ENCODE measurements at regions of chr1 and their contacts with region 1.

Region 1: GRCh38 chr1:9784508-9785133 is 39.1 kb downstream of the CLSTN1 start:
- DNase-seq: peak; percentile 63
- ATAC-seq: peak; percentile 33; the same call in 1 of the 2 replicates
- H3K4me3 Mint-ChIP-seq: no peak overlapping the region
- H3K27ac Mint-ChIP-seq: no peak overlapping the region
- H3K4me1 Mint-ChIP-seq: peaks cover 19% of the 10 kb centered on the region
- H3K27me3 Mint-ChIP-seq: no peaks in the 10 kb centered on the region
- CTCF ChIP-seq: peak; percentile 48

Region 2: DNA sequence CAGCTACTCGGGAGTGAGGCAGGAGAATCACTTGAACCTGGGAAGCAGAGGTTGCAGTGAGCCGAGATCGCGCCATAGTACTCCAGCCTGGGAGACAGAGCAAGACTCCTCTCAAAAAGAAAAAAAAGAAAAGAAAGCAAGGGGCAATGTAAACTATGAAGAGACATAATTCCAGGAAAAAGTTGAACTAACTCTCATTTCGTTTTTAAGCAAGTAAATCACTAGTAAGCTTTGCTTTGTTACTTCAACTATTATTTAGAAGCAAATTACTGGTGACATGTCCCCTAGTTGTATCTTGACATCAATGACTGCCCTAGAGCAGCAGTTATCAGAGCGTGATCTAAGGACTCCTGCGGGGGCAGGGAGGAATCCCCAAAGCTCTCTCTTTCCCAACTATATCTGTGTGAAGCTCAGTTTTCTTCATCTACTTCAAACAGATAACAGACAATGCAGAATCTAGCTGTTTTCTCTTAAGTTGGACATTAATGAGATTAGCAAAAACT is 20.4 kb after region 1 on chr1:
- CTCF ChIA-PET with region 1: interaction called, 11 read pairs
- POLR2A ChIA-PET with region 1: no interaction called
- DNase-seq: peak; percentile 9
- ATAC-seq: peak; percentile 40; the same call in 1 of the 2 replicates
- H3K4me3 Mint-ChIP-seq: no peak overlapping the region
- H3K27ac Mint-ChIP-seq: peak overlapping the region; percentile 13; the same call in 1 of the 2 replicates
- H3K4me1 Mint-ChIP-seq: peaks cover 41% of the 10 kb centered on the region
- H3K27me3 Mint-ChIP-seq: no peaks in the 10 kb centered on the region
- CTCF ChIP-seq: no peak

Region 3: DNA sequence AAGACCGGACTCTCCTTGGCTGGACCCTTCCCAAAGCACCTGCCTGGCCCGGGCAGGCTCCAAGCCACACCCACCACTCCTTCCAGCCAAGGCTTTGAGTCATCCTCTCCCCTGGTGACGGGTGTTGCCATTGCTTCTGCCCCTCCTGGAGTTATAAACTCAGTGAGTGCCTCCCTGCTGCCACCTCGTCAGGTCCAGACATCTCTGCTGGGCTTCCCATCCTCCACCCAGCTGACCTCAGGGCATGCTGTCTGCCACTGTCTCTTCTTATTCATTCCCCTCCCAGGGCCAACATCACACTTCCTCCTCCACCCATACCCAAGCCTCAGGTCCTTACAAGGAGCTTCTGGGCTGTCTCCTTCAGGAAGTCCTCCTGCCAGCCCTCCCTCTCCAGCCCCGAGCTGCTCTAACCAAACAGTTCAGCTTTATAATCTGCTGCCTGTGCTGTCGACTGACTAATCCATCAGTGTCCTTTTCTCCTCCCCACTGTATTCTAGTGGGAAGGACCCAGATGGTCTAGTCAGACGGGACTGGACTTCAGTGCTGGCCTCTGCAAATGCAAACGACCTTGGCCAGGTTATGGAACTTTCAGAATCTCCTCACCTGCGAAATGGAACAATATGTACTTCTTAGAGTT is 41.0 kb after region 1 on chr1:
- CTCF ChIA-PET with region 1: interaction called, 13 read pairs
- POLR2A ChIA-PET with region 1: interaction called, 3 read pairs
- DNase-seq: peak; percentile 58
- ATAC-seq: peak; percentile 57
- H3K4me3 Mint-ChIP-seq: peak overlapping the region; percentile 71
- H3K27ac Mint-ChIP-seq: no peak overlapping the region
- H3K4me1 Mint-ChIP-seq: peaks cover 42% of the 10 kb centered on the region
- H3K27me3 Mint-ChIP-seq: peaks cover 35% of the 10 kb centered on the region
- CTCF ChIP-seq: no peak

Region 4: DNA sequence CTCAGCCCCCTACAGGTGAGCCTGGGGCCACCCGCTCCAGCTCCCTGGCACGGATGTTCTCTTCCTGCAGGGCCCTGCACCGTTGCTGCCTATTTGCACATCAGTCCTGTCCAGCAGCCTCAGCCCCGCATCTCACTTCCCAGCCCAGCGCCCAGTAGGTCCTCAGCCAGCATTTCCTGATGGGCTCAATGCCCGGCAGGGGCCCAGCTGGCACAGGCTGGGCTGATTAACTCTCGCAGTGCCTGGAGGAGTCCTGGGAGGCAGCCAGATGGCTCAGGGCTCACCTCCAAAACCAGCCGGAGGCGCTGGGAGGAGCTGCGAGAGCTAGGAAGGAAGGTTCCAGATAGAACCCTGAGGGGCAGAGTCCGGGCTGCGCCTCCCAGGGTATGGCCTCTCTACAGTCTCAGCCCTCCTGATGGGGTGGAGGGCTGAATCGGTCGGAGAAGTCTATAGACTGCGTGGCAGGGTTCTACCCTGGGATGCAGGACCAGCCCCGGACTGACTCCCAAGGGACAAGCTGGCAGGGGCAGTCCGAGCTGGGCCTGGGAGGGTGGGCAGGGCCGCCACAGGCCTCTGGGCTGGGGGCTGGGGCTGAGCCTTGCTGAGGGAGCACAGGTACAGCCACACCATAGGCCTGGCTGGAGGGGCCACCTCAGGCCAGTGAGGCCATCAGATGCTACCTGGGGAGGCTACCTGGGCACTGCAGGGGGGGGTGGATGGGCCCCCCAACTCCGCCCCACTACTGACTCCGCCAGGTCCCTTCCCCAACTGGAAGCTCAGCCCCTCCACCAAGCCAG is 58.4 kb after region 1 on chr1:
- CTCF ChIA-PET with region 1: interaction called, 11 read pairs
- POLR2A ChIA-PET with region 1: no interaction called
- DNase-seq: no peak
- ATAC-seq: peak; percentile 46
- H3K4me3 Mint-ChIP-seq: no peak overlapping the region
- H3K27ac Mint-ChIP-seq: no peak overlapping the region
- H3K4me1 Mint-ChIP-seq: peaks cover 18% of the 10 kb centered on the region
- H3K27me3 Mint-ChIP-seq: no peaks in the 10 kb centered on the region; the same call in 1 of the 2 replicates
- CTCF ChIP-seq: no peak

Region 5: DNA sequence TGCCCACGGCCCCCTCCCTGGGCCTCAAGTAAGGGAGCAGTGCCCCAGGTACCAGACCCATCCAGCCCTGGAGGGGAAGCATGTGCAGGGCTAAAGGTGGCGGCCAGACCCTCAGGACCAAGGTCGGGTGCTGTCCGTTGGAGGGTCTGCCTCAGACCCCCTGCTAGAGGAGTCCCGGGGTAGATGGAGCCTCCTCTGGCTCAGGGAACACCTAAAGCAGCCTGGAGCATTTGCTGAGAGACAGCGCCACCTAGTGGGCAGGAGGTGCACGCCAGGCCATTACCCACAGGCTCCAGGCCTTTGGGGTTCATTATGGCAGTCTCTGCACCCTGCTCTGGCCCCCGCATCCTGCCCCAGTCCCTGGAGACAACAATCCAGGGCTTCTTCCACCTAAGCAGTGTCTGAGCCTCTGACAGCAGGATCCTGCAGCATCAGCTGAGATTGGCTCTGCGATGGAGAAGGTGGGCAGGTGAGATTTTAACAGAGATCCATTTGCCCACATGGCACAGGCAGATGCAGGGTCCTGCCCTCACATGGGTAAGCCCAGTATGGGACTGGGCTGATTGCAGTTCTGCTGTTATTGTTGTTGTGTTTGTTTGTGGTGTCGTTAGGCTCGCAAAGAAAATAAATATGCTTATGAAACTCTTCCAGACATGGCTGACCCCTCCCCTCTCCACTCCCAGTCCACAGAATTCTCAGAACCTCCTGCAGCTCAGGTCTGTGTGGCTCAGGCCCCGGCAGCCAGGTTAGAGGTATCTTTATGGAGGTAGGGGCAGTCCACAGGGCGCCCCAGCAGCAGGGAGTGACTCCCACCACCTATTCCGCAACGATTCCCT is 83.0 kb after region 1 on chr1:
- CTCF ChIA-PET with region 1: interaction called, 71 read pairs
- POLR2A ChIA-PET with region 1: no interaction called
- DNase-seq: peak; percentile 93
- ATAC-seq: peak; percentile 90
- H3K4me3 Mint-ChIP-seq: no peak overlapping the region
- H3K27ac Mint-ChIP-seq: no peak overlapping the region
- H3K4me1 Mint-ChIP-seq: peaks cover 8% of the 10 kb centered on the region
- H3K27me3 Mint-ChIP-seq: no peaks in the 10 kb centered on the region
- CTCF ChIP-seq: peak; percentile 99